ENCODE measurements at regions of chr21 and their contacts with region 1.

Region 1: DNA sequence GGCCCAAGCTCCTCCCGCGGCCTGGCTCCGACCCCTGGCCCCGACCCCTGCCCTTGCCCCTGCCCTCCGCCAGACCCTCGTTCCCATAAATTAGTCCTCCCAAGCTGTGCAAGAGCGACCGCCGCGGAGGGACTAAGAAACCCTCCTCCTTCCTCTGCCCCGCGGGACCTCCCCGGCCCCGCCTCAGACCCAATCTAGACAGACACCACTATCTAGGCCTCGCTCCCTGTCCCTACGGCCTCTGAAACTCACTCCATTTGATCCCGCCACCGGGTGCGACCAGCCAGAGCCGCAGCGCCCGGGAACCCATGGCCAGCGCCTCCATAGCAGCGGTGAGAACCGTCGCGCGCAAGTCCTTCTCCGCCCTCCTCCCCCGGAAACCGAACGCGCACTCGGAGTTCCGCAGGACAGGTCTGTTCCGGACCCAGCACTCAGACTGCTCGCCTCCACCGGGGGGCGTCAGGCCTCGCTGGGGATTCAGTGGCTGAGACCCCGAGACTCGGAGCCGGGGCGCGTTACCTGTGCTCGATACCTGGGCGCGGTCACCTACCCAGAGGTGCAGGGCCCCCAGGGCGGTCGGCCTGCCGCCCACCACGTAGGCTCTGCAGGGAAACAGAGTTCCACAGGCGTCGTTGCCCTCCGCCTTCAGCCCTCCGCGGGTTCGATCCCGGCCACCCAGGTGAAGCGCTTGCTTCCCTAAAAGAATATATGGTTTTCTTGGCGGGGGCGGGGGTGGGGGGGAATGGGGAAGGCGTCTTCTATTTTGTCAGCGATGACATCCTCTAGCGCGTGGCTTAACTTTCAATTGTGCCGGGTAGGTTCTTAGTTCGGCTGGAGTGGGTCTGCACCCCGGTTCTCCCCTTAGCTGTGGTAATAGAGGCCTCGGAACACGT is at the start of gene MRPL39:
- H3K4me3 ChIP-seq: peak within 1 kb of the TSS; percentile 95
- H3K27ac ChIP-seq: peak within 1 kb of the TSS; percentile 87
- H3K4me1 ChIP-seq: no peaks in the 10 kb centered on the region
- CTCF ChIP-seq: peak; percentile 98

Region 2: DNA sequence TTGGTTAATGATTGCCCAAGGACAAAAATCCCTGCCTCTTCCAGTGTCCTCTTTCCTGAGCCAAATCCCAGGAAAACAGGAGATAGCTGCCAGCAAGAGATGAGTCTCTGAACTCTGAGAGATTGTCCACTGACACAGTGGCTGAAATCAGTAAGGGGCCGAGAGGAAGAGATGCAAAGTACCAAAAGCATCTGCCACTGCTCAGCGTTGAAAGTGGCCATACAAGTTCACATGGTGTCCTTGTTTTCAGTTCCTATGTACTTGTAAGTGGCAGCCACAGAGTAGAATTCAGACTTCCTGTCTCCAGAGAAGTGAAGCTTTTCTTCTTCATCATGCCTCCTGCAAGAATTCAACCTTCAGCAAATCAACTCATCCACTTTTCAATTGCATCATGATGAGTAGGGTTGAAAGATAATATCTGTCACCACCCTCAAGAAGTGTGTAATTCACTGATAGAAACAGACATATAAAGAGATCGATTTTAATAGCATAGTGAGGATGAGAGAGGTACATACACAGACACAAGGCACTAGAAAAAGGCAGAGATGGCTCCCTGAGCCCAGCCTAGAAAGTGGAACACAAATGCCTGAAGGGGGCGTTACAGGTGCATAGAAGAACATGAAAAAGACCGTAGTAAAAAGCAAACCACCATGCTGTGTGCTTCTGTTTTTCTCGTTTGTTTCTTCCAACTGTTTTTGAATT is 185.9 kb before region 1 on chr21:
- CTCF ChIA-PET with region 1: interaction called, 14 read pairs
- POLR2A ChIA-PET with region 1: no interaction called
- H3K4me3 ChIP-seq: no peak overlapping the region
- H3K27ac ChIP-seq: no peak overlapping the region
- H3K4me1 ChIP-seq: no peaks in the 10 kb centered on the region
- CTCF ChIP-seq: no peak

Region 3: DNA sequence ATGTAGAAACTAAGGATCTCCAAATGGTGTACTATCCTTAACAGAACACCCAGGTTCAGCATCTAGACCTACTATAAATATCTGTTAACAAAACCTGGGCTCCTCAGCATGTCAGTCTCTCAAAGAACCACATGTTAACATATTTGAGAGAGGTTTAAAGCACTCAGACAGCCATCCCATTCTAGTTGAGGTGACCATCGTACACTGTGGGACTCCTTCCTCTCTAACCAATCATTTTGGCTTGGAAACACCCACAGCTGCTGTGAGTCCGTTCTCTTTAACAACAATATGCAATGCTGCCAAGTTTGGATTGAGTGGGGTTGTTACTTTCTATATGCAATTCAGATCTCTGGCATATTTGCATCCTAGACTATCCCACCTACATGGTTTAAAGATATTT is 105.9 kb before region 1 on chr21:
- CTCF ChIA-PET with region 1: no interaction called
- POLR2A ChIA-PET with region 1: no interaction called
- H3K4me3 ChIP-seq: no peak overlapping the region
- H3K27ac ChIP-seq: no peak overlapping the region
- H3K4me1 ChIP-seq: no peaks in the 10 kb centered on the region
- CTCF ChIP-seq: no peak

Region 4: DNA sequence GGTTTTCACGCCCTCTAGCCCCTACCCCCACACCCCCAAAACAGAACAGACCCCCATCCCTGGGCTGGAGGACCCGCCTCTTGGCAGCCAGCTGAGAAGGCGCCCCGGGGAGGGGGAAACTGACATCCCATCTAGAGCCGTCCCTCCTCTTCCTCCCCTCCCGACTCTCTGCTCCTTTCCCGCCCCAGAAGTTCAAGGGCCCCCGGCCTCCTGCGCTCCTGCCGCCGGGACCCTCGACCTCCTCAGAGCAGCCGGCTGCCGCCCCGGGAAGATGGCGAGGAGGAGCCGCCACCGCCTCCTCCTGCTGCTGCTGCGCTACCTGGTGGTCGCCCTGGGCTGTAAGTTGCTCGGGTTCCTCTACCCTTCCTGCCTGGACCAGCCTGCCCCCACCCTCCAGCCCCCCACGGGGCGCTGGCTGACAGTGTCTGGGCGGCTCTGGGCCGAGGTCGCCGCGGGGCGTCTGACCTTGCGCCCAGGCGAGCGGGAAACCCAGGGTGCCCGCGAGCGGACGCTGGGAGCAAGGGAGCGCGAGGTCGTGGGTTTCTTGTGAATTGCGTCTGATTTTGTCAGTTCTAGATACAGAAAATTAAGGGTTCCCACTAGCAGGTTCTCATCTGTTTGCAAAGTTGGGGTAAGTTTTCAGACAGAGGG is 32.3 kb after region 1 on chr21:
- CTCF ChIA-PET with region 1: interaction called, 22 read pairs
- POLR2A ChIA-PET with region 1: no interaction called
- H3K4me3 ChIP-seq: peak overlapping the region; percentile 63
- H3K27ac ChIP-seq: peak overlapping the region; percentile 57; the same call in 1 of the 2 replicates
- H3K4me1 ChIP-seq: no peaks in the 10 kb centered on the region
- CTCF ChIP-seq: peak; percentile 94

Region 5: GRCh38 chr21:25708467-25709065 is 101.2 kb after region 1 on chr21:
- CTCF ChIA-PET with region 1: interaction called, 29 read pairs
- POLR2A ChIA-PET with region 1: no interaction called
- H3K4me3 ChIP-seq: no peak overlapping the region
- H3K27ac ChIP-seq: no peak overlapping the region
- H3K4me1 ChIP-seq: no peaks in the 10 kb centered on the region
- CTCF ChIP-seq: 0 out of 2 replicates have a peak, but pooled peaks have one; percentile 13

Region 6: GRCh38 chr21:25722631-25723030 is 115.2 kb after region 1 on chr21:
- CTCF ChIA-PET with region 1: interaction called, 19 read pairs
- POLR2A ChIA-PET with region 1: no interaction called
- H3K4me3 ChIP-seq: no peak overlapping the region
- H3K27ac ChIP-seq: no peak overlapping the region
- H3K4me1 ChIP-seq: peaks cover 4% of the 10 kb centered on the region; the same call in 1 of the 2 replicates
- CTCF ChIP-seq: no peak

Region 7: DNA sequence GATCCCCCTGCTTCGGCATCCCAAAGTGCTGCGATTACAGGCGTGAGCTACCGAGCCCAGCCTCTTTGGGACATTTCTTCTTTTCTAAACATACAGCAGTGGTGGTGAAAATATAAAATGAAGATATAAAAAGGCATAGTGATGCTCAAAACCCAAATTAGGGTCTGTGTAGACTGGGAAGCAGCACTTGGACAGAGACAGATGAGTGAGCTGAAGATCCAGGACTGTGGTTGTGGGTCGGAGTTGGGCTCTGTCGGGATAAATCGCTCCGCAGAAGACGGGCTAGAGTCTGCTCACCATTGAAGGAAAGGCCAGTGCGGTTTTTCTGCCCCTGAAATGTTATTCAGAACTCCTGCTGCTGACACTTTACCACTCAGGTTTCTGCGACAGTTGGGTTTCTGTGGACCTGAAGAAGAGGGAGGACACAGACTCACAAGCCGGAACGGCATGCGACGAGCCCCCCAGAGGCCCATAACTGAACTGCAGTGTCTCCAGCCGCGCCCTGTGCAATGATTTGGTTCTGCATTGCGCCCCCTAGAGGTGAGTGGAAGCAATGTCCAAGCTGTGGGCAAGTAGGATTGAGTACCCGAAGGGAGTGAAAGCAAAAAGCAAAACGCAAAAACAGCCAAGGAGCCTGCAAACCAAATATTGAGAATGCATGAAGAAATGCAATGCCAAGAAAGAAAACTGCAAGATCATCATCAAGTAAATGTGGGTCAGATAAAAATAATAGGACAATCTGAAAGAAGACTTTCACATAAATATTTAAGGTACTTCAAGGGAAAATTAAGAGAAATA is 194.0 kb after region 1 on chr21:
- CTCF ChIA-PET with region 1: interaction called, 11 read pairs
- POLR2A ChIA-PET with region 1: no interaction called
- H3K4me3 ChIP-seq: no peak overlapping the region
- H3K27ac ChIP-seq: no peak overlapping the region
- H3K4me1 ChIP-seq: no peaks in the 10 kb centered on the region
- CTCF ChIP-seq: peak; percentile 94

Measured in HEK293 (cell line).